ENCODE measurements at regions of chr11 and their contacts with region 1.

Region 1: DNA sequence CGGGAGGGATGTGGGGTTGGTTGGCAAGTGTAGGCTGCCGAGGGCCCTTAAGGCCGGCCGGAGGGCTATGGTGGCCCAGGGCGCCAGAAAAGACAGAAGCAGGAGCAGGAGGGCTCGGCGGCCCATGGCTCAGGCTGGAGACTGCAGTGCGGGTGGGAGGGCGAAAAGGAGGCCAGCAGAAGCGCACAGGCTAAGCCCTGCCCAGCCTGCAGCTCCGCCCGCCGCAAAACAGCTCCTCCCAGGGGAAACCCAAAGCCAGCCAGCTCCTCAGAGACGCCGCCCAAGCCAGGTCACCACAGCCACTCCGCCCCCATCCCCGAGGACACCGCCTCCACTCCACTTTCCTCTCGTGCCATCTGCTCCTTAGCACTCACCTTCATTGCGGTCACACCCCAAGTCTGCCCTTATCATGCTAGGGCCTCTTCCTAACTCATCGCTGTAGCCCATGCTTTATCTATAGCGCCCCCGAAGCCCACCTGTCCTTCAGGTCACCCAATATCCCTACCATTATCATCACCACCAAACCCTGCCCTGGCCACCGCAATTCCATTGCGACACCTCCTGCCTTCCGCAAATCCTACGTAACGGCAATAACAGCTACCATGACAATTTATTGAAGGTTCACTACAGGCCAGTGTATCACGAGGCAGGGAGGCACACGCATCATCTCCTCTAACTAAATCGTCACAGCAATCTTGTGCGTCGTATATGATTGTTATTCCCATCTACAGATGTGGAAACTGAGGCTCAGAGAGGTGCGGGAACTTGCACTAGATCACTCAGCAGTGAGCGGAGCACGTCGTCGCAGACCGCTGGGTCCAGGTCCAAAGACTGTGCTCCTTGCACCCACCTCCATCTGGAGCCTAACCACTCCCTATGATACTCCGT is at the start of gene PRCP:
- DNase-seq: peak; percentile 92
- H3K4me3 ChIP-seq: peak within 1 kb of the TSS; percentile 82
- H3K27ac ChIP-seq: peak within 1 kb of the TSS; percentile 91
- H3K4me1 ChIP-seq: peaks cover 48% of the 10 kb centered on the region
- H3K27me3 ChIP-seq: no peaks in the 10 kb centered on the region
- CTCF ChIP-seq: peak; percentile 24
- total RNA-seq, gene PRCP: 40.2 TPM

Region 2: GRCh38 chr11:83156150-83156995 is 255.9 kb after region 1 on chr11:
- intact Hi-C with region 1: loop called (anchors 5 kb)
- DNase-seq: no peak
- H3K4me3 ChIP-seq: peak overlapping the region; percentile 91
- H3K27ac ChIP-seq: peak overlapping the region; percentile 99
- H3K4me1 ChIP-seq: peaks cover 52% of the 10 kb centered on the region
- H3K27me3 ChIP-seq: no peaks in the 10 kb centered on the region
- CTCF ChIP-seq: no peak

Region 3: GRCh38 chr11:83193315-83194280 is 293.1 kb after region 1 on chr11 and contains the start of gene ANKRD42:
- intact Hi-C with region 1: loop called (anchors 10 kb)
- DNase-seq: peak; percentile 90
- H3K4me3 ChIP-seq: peak within 1 kb of the TSS; percentile 85
- H3K27ac ChIP-seq: peak within 1 kb of the TSS; percentile 92
- H3K4me1 ChIP-seq: peaks cover 46% of the 10 kb centered on the region
- H3K27me3 ChIP-seq: no peaks in the 10 kb centered on the region
- CTCF ChIP-seq: no peak
- total RNA-seq, gene ANKRD42: 5.2 TPM

Region 4: DNA sequence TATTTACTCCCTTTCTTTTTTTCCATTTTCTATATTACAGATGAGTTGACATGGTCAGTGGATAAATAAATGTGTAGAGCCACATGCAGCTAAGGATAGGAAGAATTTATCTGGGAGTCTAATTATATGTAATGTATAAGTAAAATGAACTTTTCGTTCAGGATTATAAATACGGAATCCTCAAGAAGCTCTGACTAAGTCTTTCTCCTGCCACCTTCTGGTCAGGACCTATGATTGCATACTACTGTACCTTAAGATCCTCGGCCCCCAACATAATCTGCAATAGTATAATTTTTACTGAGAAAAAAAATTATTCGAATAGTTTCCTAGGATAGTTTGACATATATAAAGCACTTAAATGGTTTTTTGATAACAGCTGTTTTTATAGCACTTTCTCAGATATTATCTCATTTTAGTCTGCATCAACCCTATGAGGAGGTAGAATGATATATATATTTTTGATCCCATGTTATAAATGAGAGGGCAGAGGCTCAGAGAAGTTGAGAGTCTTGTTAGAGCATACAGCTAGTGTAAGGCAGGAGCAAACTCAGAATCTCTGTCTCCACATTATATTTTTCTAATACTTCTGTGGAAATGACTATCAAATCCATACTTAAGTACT is 349.6 kb after region 1 on chr11:
- intact Hi-C with region 1: loop called (anchors 10 kb)
- DNase-seq: no peak
- H3K4me3 ChIP-seq: no peak overlapping the region
- H3K27ac ChIP-seq: no peak overlapping the region
- H3K4me1 ChIP-seq: peaks cover 5% of the 10 kb centered on the region
- H3K27me3 ChIP-seq: no peaks in the 10 kb centered on the region
- CTCF ChIP-seq: peak; percentile 77

Region 5: DNA sequence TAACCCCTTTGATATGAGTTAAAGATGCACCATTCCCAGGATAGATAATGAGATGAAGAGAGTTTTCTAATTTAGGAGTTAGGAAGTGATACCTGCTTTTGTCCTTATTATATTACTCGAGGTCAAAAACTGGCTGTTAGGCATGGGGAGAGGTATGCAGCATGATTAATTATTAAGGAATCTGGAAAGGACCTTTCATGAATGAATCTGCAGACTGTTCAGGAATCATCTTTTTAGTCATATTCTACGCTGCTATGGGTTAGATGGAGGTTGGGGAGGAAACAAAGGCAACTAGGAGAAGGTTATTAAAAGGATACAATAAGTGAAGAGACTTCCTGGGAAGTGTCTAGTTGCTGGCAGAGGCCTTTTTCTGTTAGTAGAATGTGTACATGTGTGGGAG is 878.1 kb after region 1 on chr11:
- intact Hi-C with region 1: no loop called
- DNase-seq: no peak
- H3K4me3 ChIP-seq: no peak overlapping the region
- H3K27ac ChIP-seq: no peak overlapping the region
- H3K4me1 ChIP-seq: no peaks in the 10 kb centered on the region
- H3K27me3 ChIP-seq: no peaks in the 10 kb centered on the region
- CTCF ChIP-seq: no peak

Measured in left ventricle myocardium inferior (tissue), 1 donor.